ENCODE measurements at regions of chr12 and their contacts with region 1.

Region 1: DNA sequence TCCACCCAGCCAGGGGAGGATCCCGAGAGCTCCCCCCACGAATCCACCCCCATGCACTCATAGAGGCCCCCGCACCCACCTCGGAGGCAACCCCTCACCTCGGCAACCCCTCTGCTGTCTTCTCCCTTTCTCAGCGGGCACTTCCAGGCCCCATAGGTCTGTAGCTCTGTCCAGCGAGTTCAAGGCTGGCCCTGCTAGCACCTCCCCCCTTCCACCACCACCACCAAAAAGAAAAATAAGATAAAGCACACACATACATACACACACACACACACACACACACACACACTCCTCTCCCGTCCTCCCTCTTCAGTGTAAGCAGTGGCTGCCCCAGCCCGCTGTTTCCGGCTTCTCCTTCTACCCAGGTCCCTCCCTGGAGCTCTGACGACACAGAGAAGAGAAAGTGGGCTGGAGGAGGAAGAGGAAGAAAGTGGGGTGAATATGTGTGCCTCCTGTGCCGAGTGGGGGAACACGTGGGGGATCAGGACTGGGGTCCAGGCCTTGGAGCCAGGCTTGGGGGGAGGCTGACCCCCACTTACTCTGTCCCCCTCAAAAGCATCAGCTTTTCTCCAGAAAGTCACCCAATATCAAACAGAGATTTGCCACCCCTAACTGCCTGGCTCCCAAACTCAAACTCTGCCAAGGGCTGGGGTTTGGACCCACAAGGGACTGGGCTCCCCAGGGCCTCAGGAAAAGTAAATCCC is at the start of gene STAT6:
- DNase-seq: peak; percentile 67 to 96 (median 85)
- ATAC-seq: peak; percentile 60
- H3K4me3 ChIP-seq: peak within 1 kb of the TSS; percentile 88 to 100
- H3K4me3 Mint-ChIP-seq: peak within 1 kb of the TSS; percentile 91
- H3K27ac ChIP-seq: peak within 1 kb of the TSS; percentile 87 to 98
- H3K27ac Mint-ChIP-seq: peak within 1 kb of the TSS; percentile 94
- H3K4me1 ChIP-seq: peaks cover 24% of the 10 kb centered on the region
- H3K4me1 Mint-ChIP-seq: peaks cover 52% of the 10 kb centered on the region
- H3K27me3 ChIP-seq: no peaks in the 10 kb centered on the region
- H3K27me3 Mint-ChIP-seq: no peaks in the 10 kb centered on the region
- CTCF ChIP-seq: no peak
- total RNA-seq, gene STAT6: 116 to 127 TPM

Region 2: GRCh38 chr12:56751712-56752598 is 359.2 kb before region 1 on chr12 and contains the start of gene PRIM1:
- CTCF ChIA-PET with region 1: interaction called, 6 read pairs
- POLR2A ChIA-PET with region 1: interaction called, 5 read pairs
- intact Hi-C with region 1: loop called (anchors 2 to 5 kb)
- DNase-seq: peak; percentile 58 to 89 (median 81)
- ATAC-seq: peak; percentile 81
- H3K4me3 ChIP-seq: peak within 1 kb of the TSS; percentile 91 to 99
- H3K4me3 Mint-ChIP-seq: peak within 1 kb of the TSS; percentile 97
- H3K27ac ChIP-seq: peak within 1 kb of the TSS; percentile 71 to 76
- H3K27ac Mint-ChIP-seq: peak within 1 kb of the TSS; percentile 86
- H3K4me1 ChIP-seq: peaks cover 11% of the 10 kb centered on the region
- H3K4me1 Mint-ChIP-seq: peaks cover 22% of the 10 kb centered on the region
- H3K27me3 ChIP-seq: no peaks in the 10 kb centered on the region
- H3K27me3 Mint-ChIP-seq: no peaks in the 10 kb centered on the region
- CTCF ChIP-seq: peak; percentile 23
- total RNA-seq, gene PRIM1: 5.0 to 5.8 TPM

Region 3: DNA sequence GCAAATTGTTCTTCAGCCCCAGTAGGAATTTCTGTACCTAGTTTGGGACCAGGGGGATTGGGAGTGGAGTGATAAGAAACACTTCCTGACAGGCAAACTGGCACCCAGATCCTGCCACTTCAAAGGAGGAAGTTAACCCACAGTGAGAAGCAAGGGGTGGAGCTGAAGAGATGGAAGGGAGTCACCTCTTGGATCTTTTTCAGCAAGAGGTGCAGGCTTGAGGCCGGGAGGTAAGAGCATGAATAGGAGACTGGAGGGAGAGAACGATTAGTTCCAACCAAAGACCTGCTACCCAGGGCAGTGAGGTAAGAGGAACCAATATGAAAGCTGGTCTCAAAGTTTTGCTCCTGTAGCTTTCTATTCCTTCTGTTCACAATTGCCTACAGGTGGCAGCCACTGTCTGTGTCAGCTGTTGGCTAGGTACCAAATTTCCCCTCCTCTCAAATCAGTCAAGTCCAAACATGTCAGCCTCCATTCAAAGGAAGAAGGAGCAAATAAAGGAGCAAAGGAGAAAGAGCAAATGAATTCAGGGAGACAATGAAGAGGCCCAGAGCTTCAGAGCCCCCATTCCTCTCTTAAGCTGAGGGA is 80.0 kb before region 1 on chr12:
- CTCF ChIA-PET with region 1: interaction called, 11 read pairs
- POLR2A ChIA-PET with region 1: interaction called, 4 read pairs
- intact Hi-C with region 1: no loop called
- DNase-seq: peak in 3 of 9 experiments; percentile 8 to 48 (median 26)
- ATAC-seq: peak; percentile 38
- H3K4me3 ChIP-seq: no peak overlapping the region
- H3K4me3 Mint-ChIP-seq: peak overlapping the region; percentile 26
- H3K27ac ChIP-seq: no peak overlapping the region
- H3K27ac Mint-ChIP-seq: no peak overlapping the region
- H3K4me1 ChIP-seq: peaks cover 34% of the 10 kb centered on the region
- H3K4me1 Mint-ChIP-seq: peaks cover 35% of the 10 kb centered on the region
- H3K27me3 ChIP-seq: no peaks in the 10 kb centered on the region
- H3K27me3 Mint-ChIP-seq: no peaks in the 10 kb centered on the region
- CTCF ChIP-seq: no peak

Region 4: GRCh38 chr12:57078519-57079404 is 32.4 kb before region 1 on chr12 and contains the start of gene NEMP1:
- CTCF ChIA-PET with region 1: interaction called, 547 read pairs
- POLR2A ChIA-PET with region 1: interaction called, 54 read pairs
- intact Hi-C with region 1: loop called (anchors 2 kb)
- DNase-seq: peak; percentile 89 to 100 (median 92)
- ATAC-seq: peak; percentile 96
- H3K4me3 ChIP-seq: peak within 1 kb of the TSS; percentile 78 to 98
- H3K4me3 Mint-ChIP-seq: peak within 1 kb of the TSS; percentile 96
- H3K27ac ChIP-seq: peak within 1 kb of the TSS; percentile 72 to 94
- H3K27ac Mint-ChIP-seq: peak within 1 kb of the TSS; percentile 96
- H3K4me1 ChIP-seq: peaks cover 8% of the 10 kb centered on the region
- H3K4me1 Mint-ChIP-seq: peaks cover 25% of the 10 kb centered on the region
- H3K27me3 ChIP-seq: no peaks in the 10 kb centered on the region
- H3K27me3 Mint-ChIP-seq: no peaks in the 10 kb centered on the region
- CTCF ChIP-seq: no peak
- total RNA-seq, gene NEMP1: 4.3 to 7.4 TPM

Region 5: DNA sequence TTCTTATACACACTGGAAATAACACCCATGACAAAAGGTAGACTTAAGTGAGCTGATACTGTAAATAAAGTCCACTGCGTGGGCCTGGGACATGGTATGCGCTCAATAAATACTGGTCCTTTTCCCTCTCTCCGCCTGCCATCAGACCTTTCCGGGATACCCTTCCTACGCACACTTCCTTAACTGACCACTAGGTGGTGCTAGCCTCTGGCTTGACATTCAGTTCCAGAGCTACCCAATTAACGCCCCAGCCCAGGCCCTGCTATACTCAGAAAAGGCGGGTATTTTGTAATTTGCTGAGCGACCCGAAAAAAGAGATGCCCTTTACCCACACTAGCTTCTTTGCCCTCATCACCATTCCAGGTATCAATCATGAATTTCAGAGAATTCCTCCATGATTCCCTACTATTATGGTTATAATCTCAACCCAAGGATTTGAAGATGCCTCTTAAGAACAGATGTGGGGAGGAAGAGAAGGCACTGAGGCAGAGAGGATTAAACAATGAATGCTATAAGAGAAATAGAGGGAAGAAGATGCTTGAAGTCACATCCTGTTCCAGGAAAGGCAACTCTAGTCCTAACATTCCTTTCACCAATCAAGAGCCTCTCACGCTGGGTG is 13.2 kb after region 1 on chr12:
- CTCF ChIA-PET with region 1: interaction called, 80 read pairs
- POLR2A ChIA-PET with region 1: interaction called, 5 read pairs
- intact Hi-C with region 1: loop called in 1 of 2 experiments (anchors 1 kb)
- DNase-seq: peak; percentile 45 to 86 (median 76)
- ATAC-seq: peak; percentile 69
- H3K4me3 ChIP-seq: no peak overlapping the region
- H3K4me3 Mint-ChIP-seq: no peak overlapping the region
- H3K27ac ChIP-seq: no peak overlapping the region
- H3K27ac Mint-ChIP-seq: no peak overlapping the region
- H3K4me1 ChIP-seq: peaks cover 13% of the 10 kb centered on the region
- H3K4me1 Mint-ChIP-seq: peaks cover 12% of the 10 kb centered on the region
- H3K27me3 ChIP-seq: peaks cover 0 to 5% of the 10 kb centered on the region in 2 experiments
- H3K27me3 Mint-ChIP-seq: no peaks in the 10 kb centered on the region
- CTCF ChIP-seq: peak; percentile 91

Region 6: GRCh38 chr12:57152639-57153038 is 41.5 kb after region 1 on chr12:
- CTCF ChIA-PET with region 1: no interaction called
- POLR2A ChIA-PET with region 1: no interaction called
- intact Hi-C with region 1: no loop called
- DNase-seq: no peak
- ATAC-seq: no peak
- H3K4me3 ChIP-seq: no peak overlapping the region
- H3K4me3 Mint-ChIP-seq: no peak overlapping the region
- H3K27ac ChIP-seq: no peak overlapping the region
- H3K27ac Mint-ChIP-seq: no peak overlapping the region
- H3K4me1 ChIP-seq: peaks cover under 1% of the 10 kb centered on the region
- H3K4me1 Mint-ChIP-seq: peaks cover 2% of the 10 kb centered on the region
- H3K27me3 ChIP-seq: no peaks in the 10 kb centered on the region
- H3K27me3 Mint-ChIP-seq: peaks cover 2% of the 10 kb centered on the region
- CTCF ChIP-seq: no peak

Region 7: GRCh38 chr12:57476162-57476992 is 365.2 kb after region 1 on chr12:
- CTCF ChIA-PET with region 1: no interaction called
- POLR2A ChIA-PET with region 1: interaction called, 4 read pairs
- intact Hi-C with region 1: loop called in 1 of 2 experiments (anchors 2 kb)
- DNase-seq: peak; percentile 50 to 83 (median 81)
- ATAC-seq: peak; percentile 22
- H3K4me3 ChIP-seq: peak overlapping the region; percentile 70 to 83
- H3K4me3 Mint-ChIP-seq: peak overlapping the region; percentile 99
- H3K27ac ChIP-seq: peak overlapping the region; percentile 95 to 98
- H3K27ac Mint-ChIP-seq: peak overlapping the region; percentile 98
- H3K4me1 ChIP-seq: peaks cover 77% of the 10 kb centered on the region
- H3K4me1 Mint-ChIP-seq: peaks cover 84% of the 10 kb centered on the region
- H3K27me3 ChIP-seq: no peaks in the 10 kb centered on the region
- H3K27me3 Mint-ChIP-seq: no peaks in the 10 kb centered on the region
- CTCF ChIP-seq: peak; percentile 67